ENCODE measurements at regions of chr12 and their contacts with region 1.

Region 1: DNA sequence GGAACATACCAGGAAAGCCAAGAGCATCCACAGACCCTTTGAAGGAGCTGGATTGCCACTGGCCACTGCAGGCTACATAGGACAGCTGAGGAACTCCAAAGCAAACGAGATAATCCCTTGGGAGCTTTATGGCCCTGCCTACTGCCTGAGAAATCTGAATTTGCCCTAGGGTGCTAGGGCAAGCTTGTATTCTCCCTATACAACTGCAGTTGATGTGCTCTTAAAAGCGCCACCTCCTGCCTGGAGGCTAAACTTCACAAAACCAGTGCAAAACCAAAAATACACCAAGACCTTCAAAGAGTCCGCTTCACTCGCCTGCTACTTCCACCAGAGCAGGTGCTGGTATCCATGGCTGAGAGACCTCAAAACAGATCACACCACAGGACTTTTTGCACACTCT is 99.6 kb upstream of the KRR1 start:
- DNase-seq: peak; percentile 49 to 52
- H3K4me3 ChIP-seq: no peak overlapping the region
- H3K4me3 Mint-ChIP-seq: no peak overlapping the region
- H3K27ac Mint-ChIP-seq: no peak overlapping the region
- H3K4me1 ChIP-seq: no peaks in the 10 kb centered on the region
- H3K4me1 Mint-ChIP-seq: no peaks in the 10 kb centered on the region
- H3K27me3 ChIP-seq: no peaks in the 10 kb centered on the region
- H3K27me3 Mint-ChIP-seq: no peaks in the 10 kb centered on the region
- CTCF ChIP-seq: peak in 1 of 2 experiments; percentile 30

Region 2: GRCh38 chr12:75334384-75335030 is 276.5 kb before region 1 on chr12 and contains the start of gene GLIPR1L1:
- CTCF ChIA-PET with region 1: no interaction called
- POLR2A ChIA-PET with region 1: no interaction called
- intact Hi-C with region 1: no loop called
- DNase-seq: peak; percentile 81 to 82
- H3K4me3 ChIP-seq: no peak within 1 kb of the TSS
- H3K4me3 Mint-ChIP-seq: peak within 1 kb of the TSS; percentile 52
- H3K27ac Mint-ChIP-seq: no peak within 1 kb of the TSS
- H3K4me1 ChIP-seq: no peaks in the 10 kb centered on the region
- H3K4me1 Mint-ChIP-seq: no peaks in the 10 kb centered on the region
- H3K27me3 ChIP-seq: no peaks in the 10 kb centered on the region
- H3K27me3 Mint-ChIP-seq: no peaks in the 10 kb centered on the region
- CTCF ChIP-seq: peak; percentile 70 to 74
- total RNA-seq, gene GLIPR1L1: not detected in 2 replicates

Region 3: DNA sequence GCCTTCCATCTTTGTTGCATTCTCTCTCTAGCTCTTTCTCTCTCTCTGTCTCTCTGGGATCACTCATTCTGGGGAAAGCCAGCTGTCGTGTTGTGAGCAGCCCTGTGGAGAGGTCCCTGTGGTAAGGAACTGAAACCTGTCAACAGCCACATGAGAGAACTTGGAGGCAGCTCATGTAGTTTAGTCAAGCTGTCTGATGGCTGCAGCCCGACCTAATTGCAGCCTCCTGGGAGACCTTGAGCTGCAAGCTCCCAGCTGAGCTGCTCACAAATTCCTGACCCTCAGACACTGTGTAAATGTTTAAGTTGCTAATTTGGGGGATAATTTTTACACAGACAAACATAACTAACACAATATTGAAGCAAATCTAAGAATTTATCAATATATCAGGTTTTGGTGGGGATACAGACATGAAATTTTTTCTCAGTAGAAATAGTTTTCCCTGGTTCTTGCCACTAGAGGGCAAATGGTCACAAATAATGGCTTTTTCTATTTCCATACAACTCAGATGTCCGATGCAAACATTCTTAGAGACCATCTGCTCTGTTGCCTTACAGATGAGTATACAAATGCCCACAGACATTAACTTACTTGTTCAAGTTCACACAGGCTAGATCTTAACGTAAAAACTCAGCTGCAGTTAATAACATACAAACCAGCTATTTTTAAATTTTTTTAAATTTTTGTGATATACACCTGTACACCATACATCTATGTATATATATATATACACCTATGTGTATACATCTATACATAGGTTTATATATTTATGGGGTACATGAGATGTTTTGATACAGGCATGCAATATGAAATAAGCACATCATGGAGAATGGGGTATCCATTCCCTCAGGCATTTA is 84.2 kb before region 1 on chr12:
- CTCF ChIA-PET with region 1: interaction called, 5 read pairs
- POLR2A ChIA-PET with region 1: no interaction called
- intact Hi-C with region 1: loop called (anchors 1 kb)
- DNase-seq: peak; percentile 28 to 37
- H3K4me3 ChIP-seq: no peak overlapping the region
- H3K4me3 Mint-ChIP-seq: no peak overlapping the region
- H3K27ac Mint-ChIP-seq: no peak overlapping the region
- H3K4me1 ChIP-seq: no peaks in the 10 kb centered on the region
- H3K4me1 Mint-ChIP-seq: peaks cover 17% of the 10 kb centered on the region
- H3K27me3 ChIP-seq: no peaks in the 10 kb centered on the region
- H3K27me3 Mint-ChIP-seq: peaks cover 2% of the 10 kb centered on the region
- CTCF ChIP-seq: peak; percentile 75 to 77

Region 4: DNA sequence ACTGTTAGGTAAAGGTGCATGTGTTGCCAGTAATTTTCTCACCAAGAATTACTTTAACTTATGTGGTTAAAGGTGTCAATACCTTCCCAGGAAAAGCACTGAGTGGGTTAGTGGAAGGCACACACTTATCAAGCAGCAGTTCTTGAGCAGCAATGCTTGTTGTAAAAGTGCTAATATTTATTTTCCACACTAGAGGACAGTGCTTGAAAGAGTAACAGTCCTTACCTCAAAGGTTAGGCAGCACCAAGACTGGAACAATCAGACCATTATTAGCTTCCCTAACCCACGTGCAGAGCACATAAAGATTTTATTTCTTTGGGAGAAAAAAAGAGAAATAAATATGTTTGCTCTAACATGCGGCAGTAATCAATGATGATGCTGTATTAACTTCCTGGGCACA is 50.9 kb before region 1 on chr12:
- CTCF ChIA-PET with region 1: no interaction called
- POLR2A ChIA-PET with region 1: no interaction called
- intact Hi-C with region 1: loop called (anchors 2 kb)
- DNase-seq: no peak
- H3K4me3 ChIP-seq: no peak overlapping the region
- H3K4me3 Mint-ChIP-seq: no peak overlapping the region
- H3K27ac Mint-ChIP-seq: no peak overlapping the region
- H3K4me1 ChIP-seq: no peaks in the 10 kb centered on the region
- H3K4me1 Mint-ChIP-seq: peaks cover 5% of the 10 kb centered on the region
- H3K27me3 ChIP-seq: no peaks in the 10 kb centered on the region
- H3K27me3 Mint-ChIP-seq: no peaks in the 10 kb centered on the region
- CTCF ChIP-seq: peak in 1 of 2 experiments; percentile 50

Region 5: DNA sequence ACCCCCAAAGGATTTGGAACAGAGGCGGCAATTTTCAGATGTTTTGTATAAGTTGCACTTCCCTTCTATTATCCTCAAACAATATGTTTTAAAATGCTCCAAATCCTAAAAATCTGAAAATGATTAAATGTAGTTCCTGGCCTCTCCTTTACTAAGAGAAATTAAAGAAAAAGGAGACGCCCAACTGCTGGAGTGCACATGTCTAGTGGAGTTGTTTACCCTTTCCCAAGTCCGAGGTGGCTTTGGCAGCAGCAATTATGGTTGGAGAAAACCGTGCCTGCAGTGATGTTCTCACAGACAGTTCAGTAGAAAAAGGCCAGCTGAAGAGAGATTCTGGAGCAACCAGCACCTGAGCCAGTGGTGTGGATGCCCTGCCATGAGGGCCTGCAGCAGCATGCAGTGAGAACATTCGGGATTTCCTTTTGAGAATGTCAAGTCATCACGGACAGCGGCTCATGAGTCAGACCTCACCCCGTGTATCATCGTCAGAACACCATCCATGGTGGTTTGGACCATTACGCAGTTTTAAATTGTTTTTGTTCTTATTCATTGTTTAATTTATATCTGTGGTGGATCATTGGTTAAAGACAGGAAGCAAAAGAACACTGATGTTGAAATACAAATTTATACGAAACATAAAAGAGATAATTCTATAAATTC is 79.4 kb after region 1 on chr12:
- CTCF ChIA-PET with region 1: no interaction called
- POLR2A ChIA-PET with region 1: no interaction called
- intact Hi-C with region 1: no loop called
- DNase-seq: no peak
- H3K4me3 ChIP-seq: no peak overlapping the region
- H3K4me3 Mint-ChIP-seq: no peak overlapping the region
- H3K27ac Mint-ChIP-seq: no peak overlapping the region
- H3K4me1 ChIP-seq: no peaks in the 10 kb centered on the region
- H3K4me1 Mint-ChIP-seq: no peaks in the 10 kb centered on the region
- H3K27me3 ChIP-seq: no peaks in the 10 kb centered on the region
- H3K27me3 Mint-ChIP-seq: no peaks in the 10 kb centered on the region
- CTCF ChIP-seq: no peak